ENCODE measurements at regions of chr18 and their contacts with region 1.

Region 1: DNA sequence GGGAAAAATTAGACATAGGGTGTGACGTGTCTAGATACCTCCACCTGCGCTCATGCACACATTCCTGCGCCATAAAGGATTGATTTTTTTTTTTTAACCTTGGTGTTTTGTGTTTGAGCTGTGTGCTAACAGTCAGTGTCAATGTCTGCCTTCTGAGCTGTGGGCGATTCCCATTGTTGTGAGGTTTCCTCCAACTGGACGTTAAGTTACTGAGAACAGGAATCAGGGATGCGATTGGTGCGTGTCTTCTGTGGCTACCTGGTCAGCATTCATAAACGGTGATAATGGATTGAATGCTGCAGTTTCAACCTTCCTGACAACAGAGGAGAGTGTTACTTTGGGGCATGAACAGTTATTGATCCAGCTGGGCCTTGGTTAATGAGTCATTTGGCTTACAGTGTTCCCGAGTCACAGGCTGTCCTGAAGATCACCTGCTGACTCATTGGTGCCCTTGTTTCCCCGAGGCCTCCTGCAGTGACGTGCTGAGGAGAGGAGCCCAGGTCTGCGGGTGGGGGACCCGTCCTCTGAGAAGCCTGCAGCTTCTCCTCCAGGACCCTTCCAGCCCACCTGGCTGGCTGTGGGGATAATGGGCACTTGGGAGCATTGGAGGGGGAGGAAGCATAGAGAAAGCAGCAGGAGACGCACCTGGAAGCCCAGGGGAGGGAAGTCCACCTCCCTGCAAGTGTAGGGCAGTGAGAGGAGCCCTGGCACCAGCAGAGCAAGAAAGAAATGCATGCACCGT is 25.8 kb upstream of the CABYR start:
- DNase-seq: peak; percentile 81
- H3K4me3 Mint-ChIP-seq: peak overlapping the region; percentile 67
- H3K27ac Mint-ChIP-seq: peak overlapping the region; percentile 67
- H3K4me1 Mint-ChIP-seq: peaks cover 39% of the 10 kb centered on the region
- H3K27me3 Mint-ChIP-seq: no peaks in the 10 kb centered on the region
- CTCF ChIP-seq: no peak

Region 2: DNA sequence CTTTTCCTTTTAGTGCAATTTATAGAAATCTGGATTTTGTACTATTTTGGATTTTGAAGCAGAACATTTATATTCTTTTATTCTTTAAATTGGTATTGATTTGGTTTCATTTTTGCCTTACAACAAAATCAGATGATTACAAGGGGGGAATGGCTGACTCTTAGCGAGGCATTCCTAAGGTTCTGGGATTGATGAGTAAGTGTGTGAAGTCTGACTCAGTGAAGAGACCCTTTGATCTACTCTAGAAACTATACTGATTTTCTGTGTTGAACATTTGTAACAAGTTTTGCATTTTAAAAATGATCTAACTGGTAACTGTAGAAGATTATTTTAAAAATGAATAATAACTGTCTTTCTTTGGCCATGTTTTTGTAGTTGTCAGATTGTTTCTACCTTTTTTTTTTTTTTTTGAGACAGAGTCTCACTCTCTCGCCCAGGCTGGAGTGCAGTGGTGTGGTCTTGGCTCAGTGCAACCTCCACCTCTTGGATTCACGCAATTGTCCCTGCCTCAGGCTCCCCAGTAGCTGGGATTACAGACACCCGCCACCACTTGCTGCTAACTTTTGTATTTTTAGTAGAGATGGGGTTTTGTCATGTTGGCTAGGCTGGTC is 49.8 kb before region 1 on chr18:
- CTCF ChIA-PET with region 1: no interaction called
- intact Hi-C with region 1: loop called (anchors 5 kb)
- DNase-seq: no peak
- H3K4me3 Mint-ChIP-seq: no peak overlapping the region
- H3K27ac Mint-ChIP-seq: no peak overlapping the region
- H3K4me1 Mint-ChIP-seq: peaks cover 13% of the 10 kb centered on the region
- H3K27me3 Mint-ChIP-seq: no peaks in the 10 kb centered on the region
- CTCF ChIP-seq: no peak

Region 3: DNA sequence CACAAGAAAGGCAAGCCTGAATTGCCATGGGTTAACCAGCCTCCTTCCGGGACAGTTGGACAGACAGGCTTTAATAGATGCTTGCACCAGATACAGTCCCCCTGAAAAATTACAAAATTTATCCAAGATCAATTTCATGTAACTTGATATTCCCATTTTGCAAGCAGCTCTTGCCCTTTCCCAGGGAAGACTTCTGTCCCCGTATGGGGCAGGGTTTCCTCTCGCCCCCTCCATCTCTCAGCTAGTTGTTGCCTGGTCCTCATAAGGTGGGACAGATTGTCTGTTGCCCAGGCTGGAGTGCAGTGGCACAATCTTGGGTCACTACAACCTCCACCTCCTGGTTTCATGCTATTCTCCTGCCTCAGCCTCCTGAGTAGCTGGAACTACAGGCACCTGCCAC is 37.3 kb before region 1 on chr18:
- CTCF ChIA-PET with region 1: interaction called, 5 read pairs
- intact Hi-C with region 1: loop called (anchors 5 kb)
- DNase-seq: no peak
- H3K4me3 Mint-ChIP-seq: no peak overlapping the region
- H3K27ac Mint-ChIP-seq: peak overlapping the region; percentile 70
- H3K4me1 Mint-ChIP-seq: peaks cover 14% of the 10 kb centered on the region
- H3K27me3 Mint-ChIP-seq: no peaks in the 10 kb centered on the region
- CTCF ChIP-seq: no peak